ENCODE measurements at regions of chr18 and their contacts with region 1.

Region 1: DNA sequence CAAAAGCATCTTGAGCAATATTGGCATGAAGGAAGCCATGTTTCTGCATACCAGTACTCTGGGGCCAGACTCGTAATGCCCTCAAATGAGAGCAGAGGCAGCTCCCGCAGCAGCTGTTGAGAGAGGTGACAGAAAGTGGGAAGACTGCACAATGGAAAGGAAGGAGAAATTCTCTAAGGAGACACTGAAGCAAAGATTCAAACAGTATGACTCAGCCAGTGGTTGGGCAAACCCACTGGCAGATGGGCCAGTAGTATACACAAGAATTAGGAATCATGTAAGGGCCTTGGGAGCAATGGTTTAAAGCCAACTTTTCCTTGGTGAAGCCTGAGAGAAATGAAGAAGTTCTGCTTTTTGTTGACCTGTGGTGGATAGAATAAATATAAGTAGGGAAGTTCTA is 2092.7 kb upstream of the PIK3C3 start:
- DNase-seq: no peak
- ATAC-seq: no peak
- H3K4me3 ChIP-seq: no peak overlapping the region
- H3K27ac ChIP-seq: no peak overlapping the region
- H3K4me1 ChIP-seq: no peaks in the 10 kb centered on the region
- H3K27me3 ChIP-seq: no peaks in the 10 kb centered on the region
- CTCF ChIP-seq: no peak
- EP300 ChIP-seq: no peak
- POLR2A ChIP-seq: no peak
- RAD21 ChIP-seq: no peak

Region 2: DNA sequence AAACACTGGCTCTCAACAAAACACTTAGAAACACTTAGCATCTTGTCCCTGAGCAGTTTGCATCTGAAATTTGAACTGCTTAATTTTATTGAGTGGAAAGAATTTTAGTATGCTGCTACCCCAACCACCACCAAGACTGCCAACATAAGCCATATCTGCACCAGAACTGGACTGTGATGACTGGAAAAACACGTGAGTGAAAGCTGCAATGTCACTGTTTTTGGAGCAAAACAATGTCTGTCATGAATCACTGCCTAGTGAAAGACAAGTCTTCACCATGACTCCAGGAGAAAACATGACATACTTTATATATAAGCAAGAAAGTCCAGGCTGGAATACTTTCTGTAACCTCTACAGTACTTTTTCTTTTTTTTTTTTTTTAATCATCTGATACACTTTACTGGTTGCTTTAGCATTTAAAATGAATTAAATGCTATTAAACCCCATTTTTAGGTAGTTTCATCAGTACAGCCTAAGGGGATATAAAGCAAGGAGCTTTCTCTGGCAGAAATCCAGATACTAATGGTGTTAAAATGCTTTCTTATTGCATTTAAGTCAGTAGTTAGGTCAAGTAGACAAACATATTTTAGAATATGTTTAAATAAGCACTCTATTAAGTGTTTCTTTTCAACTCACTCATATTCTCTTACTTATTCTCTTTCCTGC is 36.7 kb before region 1 on chr18:
- CTCF ChIA-PET with region 1: no interaction called
- POLR2A ChIA-PET with region 1: no interaction called
- in situ Hi-C with region 1: no loop called
- intact Hi-C with region 1: loop called (anchors 2 kb)
- DNase-seq: no peak
- ATAC-seq: no peak
- H3K4me3 ChIP-seq: no peak overlapping the region
- H3K27ac ChIP-seq: no peak overlapping the region
- H3K4me1 ChIP-seq: no peaks in the 10 kb centered on the region
- H3K27me3 ChIP-seq: no peaks in the 10 kb centered on the region
- CTCF ChIP-seq: no peak
- EP300 ChIP-seq: no peak
- POLR2A ChIP-seq: no peak
- RAD21 ChIP-seq: no peak

Region 3: DNA sequence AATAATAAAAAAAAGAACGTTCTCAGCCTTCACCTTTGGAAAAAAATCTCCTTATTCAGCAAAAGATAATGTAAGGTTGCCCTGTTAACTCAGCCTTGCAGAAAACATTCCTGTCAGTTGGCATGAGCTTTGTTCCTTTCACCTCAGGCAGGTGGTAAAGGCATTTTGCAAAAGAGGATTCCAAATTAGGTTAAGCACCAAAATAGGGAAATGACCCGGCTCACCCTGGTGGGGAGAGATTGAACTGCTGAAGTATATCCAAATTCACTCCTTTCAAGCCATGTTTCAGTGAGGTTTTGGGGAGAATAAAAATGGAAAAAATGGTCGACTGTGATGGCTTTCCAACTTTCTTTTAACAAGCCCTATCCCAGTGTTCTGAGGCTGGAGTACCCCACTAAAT is 103.9 kb after region 1 on chr18:
- CTCF ChIA-PET with region 1: no interaction called
- POLR2A ChIA-PET with region 1: no interaction called
- in situ Hi-C with region 1: no loop called
- intact Hi-C with region 1: no loop called
- DNase-seq: no peak
- ATAC-seq: peak; percentile 35; the same call in 1 of the 3 replicates
- H3K4me3 ChIP-seq: no peak overlapping the region
- H3K27ac ChIP-seq: no peak overlapping the region
- H3K4me1 ChIP-seq: no peaks in the 10 kb centered on the region
- H3K27me3 ChIP-seq: no peaks in the 10 kb centered on the region
- CTCF ChIP-seq: no peak
- EP300 ChIP-seq: no peak
- POLR2A ChIP-seq: no peak
- RAD21 ChIP-seq: no peak

Measured in HepG2 (cell line).